ENCODE measurements at regions of chr5 and their contacts with region 1.

Region 1: GRCh38 chr5:132829742-132830435 is 558 bp downstream of the SHROOM1 start:
- DNase-seq: peak; percentile 87
- H3K4me3 ChIP-seq: peak overlapping the region; percentile 54 to 72 (median 64)
- H3K27ac ChIP-seq: peak overlapping the region; percentile 88 to 92 (median 90)
- H3K4me1 ChIP-seq: peaks cover 5 to 31% (median 21%) of the 10 kb centered on the region in 4 donors
- H3K27me3 ChIP-seq: peaks cover 13% of the 10 kb centered on the region
- CTCF ChIP-seq: peak; percentile 86 to 95 (median 94)
- EP300 ChIP-seq: no peak
- POLR2A ChIP-seq: peak; percentile 18

Region 2: DNA sequence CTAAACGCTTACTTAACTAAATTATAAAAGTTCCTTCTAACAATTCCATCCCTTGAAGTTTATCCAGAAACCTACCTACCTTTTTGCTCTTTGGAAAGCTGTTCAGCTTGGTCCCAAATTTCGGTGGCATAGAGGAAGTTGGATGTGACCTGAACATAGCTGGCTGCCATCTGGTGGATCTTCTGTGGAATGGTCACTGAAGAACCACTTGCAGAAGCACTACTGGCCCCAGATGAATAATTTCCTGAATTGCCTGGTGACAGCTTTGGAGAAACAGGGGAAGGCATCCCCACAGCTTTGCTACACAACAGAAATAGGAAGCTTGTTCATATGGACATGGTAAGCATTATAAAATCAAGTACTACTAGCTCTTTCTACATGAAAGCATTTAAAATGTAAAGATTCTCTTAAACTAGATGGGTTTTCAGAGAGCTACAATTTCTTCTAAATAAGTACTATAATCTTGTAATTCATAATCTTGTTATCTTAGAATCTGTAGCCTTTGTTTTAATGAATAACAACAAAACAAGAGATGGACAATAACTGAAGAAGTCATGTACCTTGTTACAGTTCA is 53.5 kb after region 1 on chr5:
- in situ Hi-C with region 1: loop called in 1 of 4 experiments (anchors 10 kb)
- intact Hi-C with region 1: no loop called
- DNase-seq: peak; percentile 51
- H3K4me3 ChIP-seq: no peak overlapping the region
- H3K27ac ChIP-seq: peak overlapping the region in 1 of 4 donors; percentile 2
- H3K4me1 ChIP-seq: peaks cover 0 to 10% (median 3%) of the 10 kb centered on the region in 4 donors
- H3K27me3 ChIP-seq: no peaks in the 10 kb centered on the region
- CTCF ChIP-seq: peak; percentile 56 to 79 (median 60)
- EP300 ChIP-seq: no peak
- POLR2A ChIP-seq: no peak

Measured in transverse colon (tissue), 4 donors.